ENCODE measurements at regions of chr18 and their contacts with region 1.

Region 1: DNA sequence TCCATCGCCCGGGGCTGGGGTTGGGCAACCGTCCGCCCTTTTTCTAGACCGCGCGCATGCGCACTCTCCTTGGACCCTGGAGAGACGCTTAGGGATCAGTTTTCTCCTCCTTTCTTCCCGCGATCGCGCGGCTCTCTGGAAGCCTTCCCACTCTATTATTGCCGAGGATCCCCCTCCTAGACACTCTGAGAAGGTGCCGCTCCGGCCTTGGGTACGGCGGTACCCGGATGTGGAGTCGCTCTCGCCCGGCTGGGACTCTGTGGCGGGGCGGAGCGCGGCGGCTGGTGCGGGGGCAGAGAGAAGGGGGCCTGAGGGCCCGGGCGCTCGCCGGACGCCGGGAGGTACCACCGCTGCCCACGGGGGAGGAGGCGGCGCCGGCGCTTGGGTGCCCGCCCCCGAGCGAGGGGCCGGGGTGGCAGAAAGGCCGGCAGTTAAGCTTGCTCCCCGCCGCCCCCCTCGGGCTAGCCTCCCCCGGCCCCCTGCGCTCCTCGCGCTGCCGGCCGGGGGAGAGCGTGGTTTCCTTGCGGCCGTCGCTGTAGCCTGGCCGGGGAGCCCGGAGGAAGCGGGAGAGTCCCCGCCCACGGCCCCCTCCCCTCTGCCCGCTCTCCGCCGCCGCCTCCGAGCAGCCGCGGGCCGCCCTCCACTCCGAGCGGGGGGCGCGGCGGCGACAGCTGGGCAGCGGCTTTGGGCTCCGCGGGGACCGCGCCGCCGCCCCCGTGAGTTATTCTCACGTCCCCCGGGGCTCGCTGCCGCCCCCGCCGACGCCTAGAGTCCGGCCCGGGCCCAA is at the start of gene MIB1:
- DNase-seq: peak; percentile 49
- H3K4me3 ChIP-seq: peak within 1 kb of the TSS; percentile 88
- H3K27ac ChIP-seq: peak within 1 kb of the TSS; percentile 99
- H3K4me1 ChIP-seq: no peaks in the 10 kb centered on the region
- H3K27me3 ChIP-seq: no peaks in the 10 kb centered on the region
- CTCF ChIP-seq: no peak
- total RNA-seq, gene MIB1: 23.4 to 39.3 TPM

Region 2: DNA sequence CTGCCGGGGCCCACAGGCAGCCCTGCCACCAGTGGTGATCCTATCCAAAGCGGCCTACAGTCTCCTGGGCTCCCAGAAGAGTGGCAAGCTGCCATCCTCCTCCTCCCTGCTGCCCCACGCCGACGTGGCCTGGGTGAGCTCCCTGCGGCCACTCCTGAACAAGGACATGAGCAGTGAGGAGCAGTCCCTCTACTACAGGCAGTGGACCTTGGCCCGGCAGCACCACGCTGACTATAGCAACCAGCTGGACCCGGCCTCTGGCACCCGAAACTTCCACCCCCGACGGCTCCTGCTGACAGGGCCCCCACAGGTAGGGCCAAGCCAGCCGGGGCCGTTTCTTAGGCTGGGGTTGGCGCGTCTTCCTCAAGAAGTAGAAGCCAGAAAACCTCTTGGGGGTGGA is 240.9 kb before region 1 on chr18:
- intact Hi-C with region 1: no loop called
- DNase-seq: no peak
- H3K4me3 ChIP-seq: no peak overlapping the region
- H3K27ac ChIP-seq: no peak overlapping the region
- H3K4me1 ChIP-seq: no peaks in the 10 kb centered on the region
- H3K27me3 ChIP-seq: no peaks in the 10 kb centered on the region
- CTCF ChIP-seq: no peak

Region 3: GRCh38 chr18:21612125-21612991 is 128.6 kb before region 1 on chr18 and contains the start of gene SNRPD1:
- intact Hi-C with region 1: loop called (anchors 5 kb)
- DNase-seq: peak; percentile 92
- H3K4me3 ChIP-seq: peak within 1 kb of the TSS; percentile 72
- H3K27ac ChIP-seq: peak within 1 kb of the TSS; percentile 82
- H3K4me1 ChIP-seq: no peaks in the 10 kb centered on the region
- H3K27me3 ChIP-seq: no peaks in the 10 kb centered on the region
- CTCF ChIP-seq: peak; percentile 83
- total RNA-seq, gene SNRPD1: 34.0 to 75.7 TPM

Region 4: DNA sequence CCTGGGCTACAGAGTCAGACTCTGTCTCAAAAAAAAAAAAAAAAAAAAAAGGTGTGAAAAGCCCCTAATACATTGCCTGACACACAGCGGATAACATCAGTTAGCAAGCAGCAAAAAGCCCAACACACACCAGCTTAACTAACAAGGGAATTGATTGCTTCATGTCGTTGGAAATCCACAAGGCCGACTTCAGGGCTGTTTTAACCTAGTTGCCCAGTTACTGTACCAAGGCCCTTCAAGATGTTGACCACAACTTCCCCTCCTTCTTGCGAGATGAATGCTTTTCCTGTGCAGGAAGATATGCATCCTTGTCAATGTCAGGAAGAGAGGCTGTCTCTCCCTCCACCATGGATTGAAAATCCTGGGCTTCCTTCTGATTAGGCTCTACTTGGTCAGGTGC is 202.5 kb after region 1 on chr18:
- intact Hi-C with region 1: no loop called
- DNase-seq: no peak
- H3K4me3 ChIP-seq: no peak overlapping the region
- H3K27ac ChIP-seq: no peak overlapping the region
- H3K4me1 ChIP-seq: no peaks in the 10 kb centered on the region
- H3K27me3 ChIP-seq: no peaks in the 10 kb centered on the region
- CTCF ChIP-seq: no peak